ENCODE measurements at regions of chr6 and their contacts with region 1.

Region 1: GRCh38 chr6:53956068-53956711 is 155.1 kb upstream of the MLIP start:
- ATAC-seq: peak; percentile 96 to 100 (median 100)
- H3K4me3 ChIP-seq: no peak overlapping the region
- H3K27ac ChIP-seq: no peak overlapping the region
- H3K4me1 ChIP-seq: no peaks in the 10 kb centered on the region

Region 2: GRCh38 chr6:53725791-53726431 is 230.3 kb before region 1 on chr6:
- in situ Hi-C with region 1: loop called in 1 of 9 experiments (anchors 25 kb)
- ATAC-seq: peak; percentile 75 to 95 (median 83)
- H3K4me3 ChIP-seq: no peak overlapping the region
- H3K27ac ChIP-seq: no peak overlapping the region
- H3K4me1 ChIP-seq: no peaks in the 10 kb centered on the region

Region 3: DNA sequence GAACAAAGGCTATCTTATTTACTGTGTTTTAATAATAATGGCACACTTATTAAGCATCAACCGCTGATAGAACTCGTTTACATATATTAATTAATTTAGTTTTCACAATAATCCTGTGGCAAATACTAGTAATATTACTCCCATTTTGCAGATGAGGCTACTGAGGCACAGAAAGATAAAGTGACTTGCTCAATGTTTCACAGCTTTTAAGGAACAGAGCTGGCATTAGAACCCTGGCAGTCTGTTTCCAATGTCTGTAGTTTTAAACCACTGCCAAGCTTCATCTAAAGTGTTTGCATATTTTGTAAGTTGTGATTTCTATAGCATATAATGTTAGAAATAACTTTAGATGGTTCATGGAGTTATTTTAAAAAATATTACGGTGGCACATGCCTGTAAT is 199.8 kb before region 1 on chr6:
- in situ Hi-C with region 1: no loop called
- ATAC-seq: no peak
- H3K4me3 ChIP-seq: no peak overlapping the region
- H3K27ac ChIP-seq: no peak overlapping the region
- H3K4me1 ChIP-seq: no peaks in the 10 kb centered on the region

Region 4: DNA sequence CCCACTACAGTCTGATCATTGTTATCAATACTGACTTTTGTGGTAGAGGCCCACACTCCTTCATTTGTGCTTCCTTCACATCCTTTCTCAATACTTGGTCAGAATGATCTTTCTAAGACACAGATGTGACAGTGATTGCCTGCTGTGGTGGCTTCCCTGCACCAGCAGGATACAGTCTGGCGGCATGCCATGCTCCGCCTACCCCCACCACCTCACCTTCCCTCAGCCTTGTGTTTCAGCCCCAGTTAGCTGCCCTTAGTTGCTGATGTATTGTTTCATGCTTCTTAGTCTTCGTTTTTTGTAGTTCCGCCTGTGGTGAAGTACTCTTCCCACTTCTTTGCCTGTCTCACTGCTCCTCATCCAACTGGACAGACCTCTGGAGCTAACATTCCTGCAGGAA is 150.5 kb before region 1 on chr6:
- in situ Hi-C with region 1: no loop called
- ATAC-seq: peak in 2 of 8 experiments; percentile 31 to 40
- H3K4me3 ChIP-seq: no peak overlapping the region
- H3K27ac ChIP-seq: no peak overlapping the region
- H3K4me1 ChIP-seq: peaks cover 21 to 29% of the 10 kb centered on the region in 2 donors

Measured in motor neuron (in vitro differentiated cells).